ENCODE measurements at regions of chr6 and their contacts with region 1.

Region 1: DNA sequence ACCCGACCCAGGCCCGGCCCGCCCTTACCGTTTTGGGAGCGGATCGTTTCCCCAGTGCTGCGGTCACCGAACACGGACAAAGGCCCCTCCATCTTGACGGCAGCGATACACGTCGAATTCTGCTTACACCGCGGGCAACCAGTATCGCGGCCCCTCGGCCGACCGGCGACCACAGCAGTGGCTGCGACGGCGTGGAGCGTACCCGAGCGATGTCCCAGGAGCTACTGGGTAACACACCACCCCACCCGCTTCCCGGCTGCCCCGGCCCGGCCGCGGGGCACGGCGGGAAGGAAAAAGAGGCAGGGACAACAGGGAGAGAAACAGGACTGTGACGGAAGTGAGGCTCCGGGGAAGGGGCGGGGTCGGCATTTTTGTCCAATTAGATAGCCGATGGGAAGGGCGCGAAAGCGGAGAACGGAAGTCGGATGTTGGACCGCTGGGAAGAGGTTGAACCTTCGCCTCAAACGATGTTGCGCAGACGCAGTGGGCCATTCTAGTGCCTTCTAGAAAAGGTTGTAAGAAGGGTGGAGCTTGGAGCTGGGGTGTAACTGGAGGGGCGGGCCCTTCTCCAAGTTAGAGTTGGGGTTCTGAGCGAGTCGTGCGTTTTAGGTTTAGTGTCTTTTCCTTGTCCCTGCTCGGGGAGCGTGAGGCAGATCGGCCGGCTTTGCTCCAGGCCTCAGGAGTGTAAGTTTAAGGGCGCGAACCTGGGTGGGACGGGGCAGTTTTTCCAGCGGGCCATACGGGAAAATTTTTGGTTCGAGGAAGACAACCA is at the start of gene TCP1:
- DNase-seq: peak; percentile 100
- H3K4me3 Mint-ChIP-seq: peak within 1 kb of the TSS; percentile 97
- H3K27ac Mint-ChIP-seq: peak within 1 kb of the TSS; percentile 98
- H3K4me1 Mint-ChIP-seq: peaks cover 46% of the 10 kb centered on the region
- H3K27me3 Mint-ChIP-seq: peaks cover 3% of the 10 kb centered on the region
- total RNA-seq, gene TCP1: 528 and 531 TPM in 2 replicates

Region 2: DNA sequence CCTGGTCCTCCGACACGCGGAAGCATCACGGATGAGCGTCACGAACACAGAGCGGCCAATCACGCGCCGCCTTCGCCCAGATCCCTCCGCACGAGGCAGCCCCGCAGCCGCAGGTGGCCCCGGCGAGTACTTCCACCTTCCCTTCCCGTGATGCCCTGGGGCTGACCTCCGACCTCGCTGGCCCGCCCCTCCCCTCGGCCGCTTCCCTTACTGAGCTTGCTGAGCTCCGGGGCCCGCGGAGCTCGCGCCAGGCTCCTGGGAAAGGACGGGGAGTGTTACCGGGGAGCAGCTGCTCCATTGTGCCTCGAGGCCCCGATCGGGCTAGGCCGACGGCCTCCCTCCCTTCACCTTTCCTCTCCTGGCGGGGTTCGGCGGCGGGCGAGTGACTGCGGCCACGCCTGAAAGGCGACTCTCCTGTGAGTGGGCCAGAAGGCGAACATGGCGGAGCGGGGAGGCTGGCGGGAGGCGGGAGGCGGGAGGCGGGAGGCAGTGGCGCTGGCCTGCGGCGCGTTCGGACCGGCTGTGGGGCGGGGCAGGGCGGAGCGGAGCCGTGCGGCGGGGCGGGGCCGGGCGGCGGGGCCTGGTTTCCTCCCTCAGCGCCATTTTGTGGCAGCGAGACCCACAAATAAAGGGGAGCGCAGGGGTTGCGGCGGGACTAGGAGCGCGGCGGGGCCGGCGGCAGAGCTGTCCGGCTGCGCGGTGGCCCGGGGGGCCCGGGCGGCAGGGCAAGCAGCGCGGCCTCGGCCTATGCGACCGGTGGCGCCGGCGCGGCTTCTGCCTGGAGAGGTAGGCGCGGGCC is 62.4 kb before region 1 on chr6 and contains the start of gene WTAP:
- intact Hi-C with region 1: loop called (anchors 1 kb)
- DNase-seq: peak; percentile 98
- H3K4me3 Mint-ChIP-seq: peak within 1 kb of the TSS; percentile 96
- H3K27ac Mint-ChIP-seq: peak within 1 kb of the TSS; percentile 98
- H3K4me1 Mint-ChIP-seq: peaks cover 34% of the 10 kb centered on the region
- H3K27me3 Mint-ChIP-seq: no peaks in the 10 kb centered on the region
- total RNA-seq, gene WTAP: 107 and 109 TPM in 2 replicates

Region 3: DNA sequence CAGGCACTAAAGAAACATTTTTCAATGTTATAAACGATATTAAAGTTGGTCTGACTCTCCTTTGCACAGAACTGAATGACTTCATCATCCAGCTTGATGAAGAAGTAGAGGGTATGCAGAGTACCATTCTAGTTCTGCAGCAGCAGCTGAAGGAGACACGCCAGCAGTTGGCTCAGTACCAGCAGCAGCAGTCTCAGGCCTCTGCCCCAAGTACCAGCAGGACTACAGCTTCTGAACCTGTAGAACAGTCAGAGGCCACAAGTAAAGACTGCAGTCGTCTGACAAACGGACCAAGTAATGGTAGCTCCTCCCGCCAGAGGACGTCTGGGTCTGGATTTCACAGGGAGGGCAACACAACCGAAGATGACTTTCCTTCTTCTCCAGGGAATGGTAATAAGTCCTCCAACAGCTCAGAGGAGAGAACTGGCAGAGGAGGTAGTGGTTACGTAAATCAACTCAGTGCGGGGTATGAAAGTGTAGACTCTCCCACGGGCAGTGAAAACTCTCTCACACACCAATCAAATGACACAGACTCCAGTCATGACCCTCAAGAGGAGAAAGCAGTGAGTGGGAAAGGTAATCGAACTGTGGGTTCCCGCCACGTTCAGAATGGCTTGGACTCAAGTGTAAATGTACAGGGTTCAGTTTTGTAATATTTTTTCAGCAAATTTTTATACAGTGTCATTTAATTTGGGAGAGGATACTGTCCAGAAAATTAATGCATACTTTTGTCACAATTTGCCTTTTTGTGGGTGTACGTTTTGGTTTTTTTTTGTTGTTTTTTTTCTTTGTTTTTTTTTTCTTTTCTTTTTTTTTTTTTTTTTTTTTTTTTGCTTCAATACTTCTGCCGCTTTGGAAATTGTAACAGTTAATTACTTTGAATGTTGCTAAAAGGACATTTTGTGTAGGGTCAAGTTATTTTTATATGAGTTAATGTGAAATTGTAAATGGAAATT is 34.3 kb before region 1 on chr6:
- intact Hi-C with region 1: loop called (anchors 5 kb)
- DNase-seq: no peak
- H3K4me3 Mint-ChIP-seq: no peak overlapping the region
- H3K27ac Mint-ChIP-seq: peak overlapping the region; percentile 14
- H3K4me1 Mint-ChIP-seq: peaks cover 17% of the 10 kb centered on the region
- H3K27me3 Mint-ChIP-seq: no peaks in the 10 kb centered on the region

Region 4: DNA sequence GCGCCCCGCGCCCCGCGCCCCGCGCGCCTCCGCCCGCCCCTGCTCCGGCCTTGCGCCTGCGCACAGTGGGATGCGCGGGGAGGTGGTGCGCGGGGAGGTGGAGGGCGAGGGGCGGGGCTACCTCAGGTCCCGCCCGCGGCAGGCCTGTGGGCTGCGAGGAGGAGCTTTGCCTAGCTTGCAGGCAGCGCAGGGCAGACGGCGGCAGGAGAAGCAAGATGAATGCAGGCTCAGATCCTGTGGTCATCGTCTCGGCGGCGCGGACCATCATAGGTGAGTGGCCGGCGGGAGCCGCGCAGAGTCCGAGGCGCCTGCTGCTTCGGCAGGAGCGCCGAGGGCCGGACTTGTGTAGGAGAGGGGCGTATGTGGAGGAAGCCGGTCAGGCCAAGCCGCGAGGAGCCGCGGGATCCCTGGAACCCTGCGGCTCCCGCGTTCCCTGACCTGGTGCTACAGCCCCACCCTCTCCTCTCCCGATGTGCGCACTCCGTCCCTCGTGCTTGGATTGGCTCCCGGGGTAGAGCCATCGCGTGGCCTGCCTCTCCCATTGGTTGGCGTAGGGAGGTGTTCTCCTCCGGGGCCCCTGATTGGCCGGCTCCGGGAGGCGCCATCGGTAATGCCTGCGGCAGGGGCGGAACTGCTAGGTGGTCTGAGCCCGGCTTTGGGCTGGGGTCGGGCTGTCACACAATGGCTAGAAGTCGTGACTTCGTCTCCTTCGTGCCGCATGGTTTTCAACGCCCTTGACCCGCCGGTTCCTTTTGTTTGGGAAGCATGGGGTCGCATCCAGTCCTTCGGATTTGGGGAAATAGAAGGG is 27.5 kb before region 1 on chr6 and contains the start of gene ACAT2:
- intact Hi-C with region 1: loop called (anchors 1 kb)
- DNase-seq: peak; percentile 98
- H3K4me3 Mint-ChIP-seq: peak within 1 kb of the TSS; percentile 94
- H3K27ac Mint-ChIP-seq: peak within 1 kb of the TSS; percentile 98
- H3K4me1 Mint-ChIP-seq: peaks cover 42% of the 10 kb centered on the region
- H3K27me3 Mint-ChIP-seq: no peaks in the 10 kb centered on the region
- total RNA-seq, gene ACAT2: 85.3 and 88.2 TPM in 2 replicates

Region 5: GRCh38 chr6:159941286-159942113 is 151.9 kb after region 1 on chr6:
- intact Hi-C with region 1: loop called (anchors 2 kb)
- DNase-seq: peak; percentile 82
- H3K4me3 Mint-ChIP-seq: no peak overlapping the region
- H3K27ac Mint-ChIP-seq: no peak overlapping the region
- H3K4me1 Mint-ChIP-seq: peaks cover 6% of the 10 kb centered on the region
- H3K27me3 Mint-ChIP-seq: peaks cover 18% of the 10 kb centered on the region

Region 6: GRCh38 chr6:159968440-159969203 is 179.1 kb after region 1 on chr6 and contains the start of gene IGF2R:
- intact Hi-C with region 1: loop called (anchors 2 kb)
- DNase-seq: peak; percentile 98
- H3K4me3 Mint-ChIP-seq: peak within 1 kb of the TSS; percentile 88
- H3K27ac Mint-ChIP-seq: peak within 1 kb of the TSS; percentile 91
- H3K4me1 Mint-ChIP-seq: peaks cover 37% of the 10 kb centered on the region
- H3K27me3 Mint-ChIP-seq: peaks cover 23% of the 10 kb centered on the region
- total RNA-seq, gene IGF2R: 75.1 and 77.9 TPM in 2 replicates

Region 7: GRCh38 chr6:160102956-160103824 is 313.6 kb after region 1 on chr6:
- intact Hi-C with region 1: loop called (anchors 10 kb)
- DNase-seq: peak; percentile 72
- H3K4me3 Mint-ChIP-seq: no peak overlapping the region
- H3K27ac Mint-ChIP-seq: no peak overlapping the region
- H3K4me1 Mint-ChIP-seq: peaks cover 15% of the 10 kb centered on the region
- H3K27me3 Mint-ChIP-seq: no peaks in the 10 kb centered on the region